CD8-positive, alpha-beta T cell (primary cell): ENCODE measurements at regions of chr6 and their contacts with region 1.

Region 1: GRCh38 chr6:26045065-26045927 is 41.9 kb upstream of the HFE start:
- DNase-seq: peak; percentile 54 to 93 (median 79)
- ATAC-seq: peak; percentile 59
- H3K4me3 ChIP-seq: peak overlapping the region; percentile 67 to 76
- H3K4me3 Mint-ChIP-seq: peak overlapping the region; percentile 89
- H3K27ac ChIP-seq: peak overlapping the region; percentile 73 to 81
- H3K27ac Mint-ChIP-seq: peak overlapping the region; percentile 98
- H3K4me1 ChIP-seq: peaks cover 7% of the 10 kb centered on the region
- H3K4me1 Mint-ChIP-seq: peaks cover 14% of the 10 kb centered on the region
- H3K27me3 ChIP-seq: no peaks in the 10 kb centered on the region
- H3K27me3 Mint-ChIP-seq: no peaks in the 10 kb centered on the region
- CTCF ChIP-seq: no peak

Region 2: GRCh38 chr6:25992413-25993037 is 52.8 kb before region 1 on chr6:
- CTCF ChIA-PET with region 1: interaction called, 4 read pairs
- POLR2A ChIA-PET with region 1: interaction called, 22 read pairs
- intact Hi-C with region 1: no loop called
- DNase-seq: peak; percentile 87 to 97 (median 94)
- ATAC-seq: peak; percentile 96
- H3K4me3 ChIP-seq: peak overlapping the region; percentile 62 to 85
- H3K4me3 Mint-ChIP-seq: peak overlapping the region; percentile 96
- H3K27ac ChIP-seq: peak overlapping the region; percentile 63 to 81
- H3K27ac Mint-ChIP-seq: peak overlapping the region; percentile 96
- H3K4me1 ChIP-seq: peaks cover 3% of the 10 kb centered on the region
- H3K4me1 Mint-ChIP-seq: peaks cover 32% of the 10 kb centered on the region
- H3K27me3 ChIP-seq: no peaks in the 10 kb centered on the region
- H3K27me3 Mint-ChIP-seq: no peaks in the 10 kb centered on the region
- CTCF ChIP-seq: peak; percentile 100

Region 3: GRCh38 chr6:26031595-26032339 is 13.5 kb before region 1 on chr6:
- CTCF ChIA-PET with region 1: interaction called, 51 read pairs
- POLR2A ChIA-PET with region 1: interaction called, 506 read pairs
- intact Hi-C with region 1: loop called (anchors 1 kb)
- DNase-seq: peak; percentile 79 to 93 (median 88)
- ATAC-seq: peak; percentile 63
- H3K4me3 ChIP-seq: peak overlapping the region; percentile 68 to 71
- H3K4me3 Mint-ChIP-seq: peak overlapping the region; percentile 93
- H3K27ac ChIP-seq: peak overlapping the region; percentile 76 to 79
- H3K27ac Mint-ChIP-seq: peak overlapping the region; percentile 96
- H3K4me1 ChIP-seq: peaks cover 31% of the 10 kb centered on the region
- H3K4me1 Mint-ChIP-seq: peaks cover 46% of the 10 kb centered on the region
- H3K27me3 ChIP-seq: no peaks in the 10 kb centered on the region
- H3K27me3 Mint-ChIP-seq: no peaks in the 10 kb centered on the region
- CTCF ChIP-seq: no peak

Region 4: DNA sequence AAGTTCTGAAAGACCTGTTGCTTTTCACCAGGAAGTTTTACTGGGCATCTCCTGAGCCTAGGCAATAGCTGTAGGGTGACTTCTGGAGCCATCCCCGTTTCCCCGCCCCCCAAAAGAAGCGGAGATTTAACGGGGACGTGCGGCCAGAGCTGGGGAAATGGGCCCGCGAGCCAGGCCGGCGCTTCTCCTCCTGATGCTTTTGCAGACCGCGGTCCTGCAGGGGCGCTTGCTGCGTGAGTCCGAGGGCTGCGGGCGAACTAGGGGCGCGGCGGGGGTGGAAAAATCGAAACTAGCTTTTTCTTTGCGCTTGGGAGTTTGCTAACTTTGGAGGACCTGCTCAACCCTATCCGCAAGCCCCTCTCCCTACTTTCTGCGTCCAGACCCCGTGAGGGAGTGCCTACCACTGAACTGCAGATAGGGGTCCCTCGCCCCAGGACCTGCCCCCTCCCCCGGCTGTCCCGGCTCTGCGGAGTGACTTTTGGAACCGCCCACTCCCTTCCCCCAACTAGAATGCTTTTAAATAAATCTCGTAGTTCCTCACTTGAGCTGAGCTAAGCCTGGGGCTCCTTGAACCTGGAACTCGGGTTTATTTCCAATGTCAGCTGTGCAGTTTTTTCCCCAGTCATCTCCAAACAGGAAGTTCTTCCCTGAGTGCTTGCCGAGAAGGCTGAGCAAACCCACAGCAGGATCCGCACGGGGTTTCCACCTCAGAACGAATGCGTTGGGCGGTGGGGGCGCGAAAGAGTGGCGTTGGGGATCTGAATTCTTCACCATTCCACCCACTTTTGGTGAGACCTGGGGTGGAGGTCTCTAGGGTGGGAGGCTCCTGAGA is 42.2 kb after region 1 on chr6 and contains the start of gene HFE:
- CTCF ChIA-PET with region 1: interaction called, 5 read pairs
- POLR2A ChIA-PET with region 1: interaction called, 20 read pairs
- intact Hi-C with region 1: no loop called
- DNase-seq: peak in 7 of 9 experiments; percentile 10 to 59 (median 40)
- ATAC-seq: peak; percentile 35
- H3K4me3 ChIP-seq: peak within 1 kb of the TSS; percentile 75 to 84
- H3K4me3 Mint-ChIP-seq: peak within 1 kb of the TSS; percentile 88
- H3K27ac ChIP-seq: peak within 1 kb of the TSS; percentile 56 to 60
- H3K27ac Mint-ChIP-seq: peak within 1 kb of the TSS; percentile 81
- H3K4me1 ChIP-seq: peaks cover 27% of the 10 kb centered on the region
- H3K4me1 Mint-ChIP-seq: peaks cover 36% of the 10 kb centered on the region
- H3K27me3 ChIP-seq: peaks cover 0 to 2% of the 10 kb centered on the region in 2 experiments
- H3K27me3 Mint-ChIP-seq: no peaks in the 10 kb centered on the region
- CTCF ChIP-seq: no peak
- total RNA-seq, gene HFE: 0.30 to 0.44 TPM

Region 5: DNA sequence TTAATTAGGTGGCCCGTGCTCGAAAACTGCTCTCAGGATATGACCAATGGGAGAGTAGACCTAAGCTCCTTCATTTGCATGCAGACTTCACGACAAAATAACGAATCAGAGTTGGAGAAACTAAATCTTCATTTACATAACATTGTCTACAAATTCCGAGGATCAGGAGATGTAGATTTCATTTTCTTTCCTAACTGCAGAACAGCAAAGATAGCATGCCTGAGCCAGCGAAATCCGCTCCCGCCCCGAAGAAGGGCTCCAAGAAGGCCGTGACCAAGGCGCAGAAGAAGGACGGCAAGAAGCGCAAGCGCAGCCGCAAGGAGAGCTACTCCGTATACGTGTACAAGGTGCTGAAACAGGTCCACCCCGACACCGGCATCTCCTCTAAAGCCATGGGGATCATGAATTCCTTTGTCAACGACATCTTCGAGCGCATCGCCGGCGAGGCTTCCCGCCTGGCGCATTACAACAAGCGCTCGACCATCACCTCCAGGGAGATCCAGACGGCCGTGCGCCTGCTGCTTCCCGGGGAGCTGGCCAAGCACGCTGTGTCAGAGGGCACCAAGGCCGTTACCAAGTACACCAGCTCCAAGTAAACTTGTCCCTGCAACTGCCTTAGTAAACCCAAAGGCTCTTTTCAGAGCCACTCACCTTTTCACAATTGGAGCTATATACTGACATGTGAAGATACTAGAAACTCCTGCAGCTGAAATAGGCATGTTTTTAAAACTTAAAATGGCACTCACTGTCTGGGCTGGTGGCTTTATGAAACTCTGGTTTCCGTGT is 138.5 kb after region 1 on chr6:
- CTCF ChIA-PET with region 1: no interaction called
- POLR2A ChIA-PET with region 1: interaction called, 12 read pairs
- intact Hi-C with region 1: no loop called
- DNase-seq: peak in 7 of 9 experiments; percentile 33 to 90 (median 59)
- ATAC-seq: peak; percentile 88
- H3K4me3 ChIP-seq: peak overlapping the region; percentile 60 to 71
- H3K4me3 Mint-ChIP-seq: peak overlapping the region; percentile 100
- H3K27ac ChIP-seq: peak overlapping the region; percentile 61 to 76
- H3K27ac Mint-ChIP-seq: peak overlapping the region; percentile 99
- H3K4me1 ChIP-seq: peaks cover 20% of the 10 kb centered on the region
- H3K4me1 Mint-ChIP-seq: peaks cover 42% of the 10 kb centered on the region
- H3K27me3 ChIP-seq: no peaks in the 10 kb centered on the region
- H3K27me3 Mint-ChIP-seq: no peaks in the 10 kb centered on the region
- CTCF ChIP-seq: no peak

Region 6: GRCh38 chr6:26234421-26235296 is 189.4 kb after region 1 on chr6:
- CTCF ChIA-PET with region 1: interaction called, 5 read pairs
- POLR2A ChIA-PET with region 1: interaction called, 23 read pairs
- intact Hi-C with region 1: no loop called
- DNase-seq: peak; percentile 55 to 88 (median 66)
- ATAC-seq: peak; percentile 63
- H3K4me3 ChIP-seq: peak overlapping the region; percentile 66 to 76
- H3K4me3 Mint-ChIP-seq: peak overlapping the region; percentile 85
- H3K27ac ChIP-seq: peak overlapping the region; percentile 84 to 92
- H3K27ac Mint-ChIP-seq: peak overlapping the region; percentile 93
- H3K4me1 ChIP-seq: peaks cover 14% of the 10 kb centered on the region
- H3K4me1 Mint-ChIP-seq: peaks cover 31% of the 10 kb centered on the region
- H3K27me3 ChIP-seq: no peaks in the 10 kb centered on the region
- H3K27me3 Mint-ChIP-seq: no peaks in the 10 kb centered on the region
- CTCF ChIP-seq: no peak

Region 7: DNA sequence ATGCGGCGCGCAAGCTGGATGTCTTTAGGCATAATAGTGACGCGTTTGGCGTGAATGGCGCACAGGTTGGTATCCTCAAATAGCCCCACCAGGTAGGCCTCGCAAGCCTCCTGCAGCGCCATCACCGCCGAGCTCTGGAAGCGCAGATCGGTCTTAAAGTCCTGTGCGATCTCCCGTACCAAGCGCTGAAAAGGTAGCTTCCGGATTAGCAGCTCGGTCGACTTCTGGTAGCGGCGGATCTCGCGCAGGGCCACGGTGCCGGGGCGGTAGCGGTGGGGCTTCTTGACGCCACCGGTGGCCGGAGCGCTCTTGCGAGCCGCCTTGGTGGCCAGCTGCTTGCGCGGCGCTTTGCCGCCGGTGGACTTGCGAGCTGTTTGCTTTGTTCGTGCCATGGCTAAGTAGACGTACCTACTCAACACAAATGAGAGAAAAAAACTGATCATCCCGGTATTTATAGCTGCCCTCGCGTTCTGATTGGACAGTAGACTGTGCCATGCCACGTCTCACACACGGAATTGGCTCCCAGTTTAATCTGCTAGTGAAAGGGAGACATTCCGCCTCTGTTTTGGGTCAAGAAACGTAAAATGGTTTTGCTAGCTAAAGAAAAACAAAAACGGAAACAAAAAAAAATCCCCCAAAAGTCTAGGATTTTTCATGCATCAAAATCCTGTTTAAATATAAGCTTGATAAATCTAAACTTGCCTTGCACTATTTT is 1826.8 kb after region 1 on chr6:
- CTCF ChIA-PET with region 1: no interaction called
- POLR2A ChIA-PET with region 1: interaction called, 14 read pairs
- intact Hi-C with region 1: no loop called
- DNase-seq: peak; percentile 72 to 97 (median 85)
- ATAC-seq: peak; percentile 75
- H3K4me3 ChIP-seq: peak overlapping the region; percentile 54 to 67
- H3K4me3 Mint-ChIP-seq: peak overlapping the region; percentile 82
- H3K27ac ChIP-seq: peak overlapping the region; percentile 81 to 86
- H3K27ac Mint-ChIP-seq: peak overlapping the region; percentile 98
- H3K4me1 ChIP-seq: peaks cover 20% of the 10 kb centered on the region
- H3K4me1 Mint-ChIP-seq: peaks cover 36% of the 10 kb centered on the region
- H3K27me3 ChIP-seq: peaks cover 0 to 3% of the 10 kb centered on the region in 2 experiments
- H3K27me3 Mint-ChIP-seq: no peaks in the 10 kb centered on the region
- CTCF ChIP-seq: peak; percentile 48